PC-3 (cell line): ENCODE measurements at regions of chr10 and their contacts with region 1.

Region 1: GRCh38 chr10:20877986-20878983 is 18.8 kb downstream of the NEBL start:
- DNase-seq: peak; percentile 59
- ATAC-seq: peak; percentile 87
- H3K4me3 ChIP-seq: peak overlapping the region; percentile 54; the same call in 1 of the 2 replicates
- H3K27ac ChIP-seq: peak overlapping the region; percentile 99
- H3K4me1 ChIP-seq: peaks cover 29% of the 10 kb centered on the region
- H3K27me3 ChIP-seq: no peaks in the 10 kb centered on the region
- CTCF ChIP-seq: no peak

Region 2: DNA sequence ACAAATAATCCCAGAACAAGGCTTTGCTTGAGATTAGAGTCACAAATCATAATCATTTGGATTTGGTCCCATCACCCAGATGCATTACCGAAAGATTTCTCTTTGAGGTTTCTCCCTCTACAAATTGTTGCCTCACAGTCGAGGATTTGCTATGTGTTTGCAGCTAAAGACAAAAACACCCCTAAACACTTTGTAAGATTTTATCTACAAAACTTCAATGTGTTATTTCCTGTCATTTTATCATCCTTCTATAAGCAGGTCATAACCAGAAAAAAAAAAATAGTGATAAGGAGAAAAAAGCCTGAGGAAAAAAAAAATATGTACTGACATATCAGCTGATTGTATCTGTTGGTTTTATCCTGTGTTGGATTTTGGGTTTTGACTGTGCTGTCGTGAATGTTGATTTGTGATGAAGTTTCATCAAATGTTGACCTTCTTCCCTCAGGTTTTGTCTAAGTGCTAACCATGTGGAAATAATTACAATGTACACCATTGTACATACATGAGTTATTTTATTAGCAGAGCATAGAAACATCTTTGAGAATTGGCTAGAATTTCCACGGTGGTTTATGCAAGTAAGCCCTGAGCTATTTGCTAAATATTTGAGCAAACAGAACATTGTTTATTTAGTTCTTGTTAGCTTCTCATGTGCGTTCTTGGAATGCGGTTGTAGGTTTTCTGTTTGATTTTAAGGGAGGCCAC is 255.6 kb before region 1 on chr10:
- CTCF ChIA-PET with region 1: no interaction called
- POLR2A ChIA-PET with region 1: no interaction called
- intact Hi-C with region 1: no loop called
- DNase-seq: peak; percentile 87
- ATAC-seq: peak; percentile 94
- H3K4me3 ChIP-seq: no peak overlapping the region
- H3K27ac ChIP-seq: peak overlapping the region; percentile 43
- H3K4me1 ChIP-seq: peaks cover 12% of the 10 kb centered on the region
- H3K27me3 ChIP-seq: 0 out of 2 replicates have a peak, but pooled peaks cover 4% of the 10 kb centered on the region
- CTCF ChIP-seq: no peak

Region 3: GRCh38 chr10:20785174-20785573 is 93.1 kb before region 1 on chr10:
- CTCF ChIA-PET with region 1: no interaction called
- POLR2A ChIA-PET with region 1: no interaction called
- intact Hi-C with region 1: no loop called
- DNase-seq: no peak
- ATAC-seq: no peak
- H3K4me3 ChIP-seq: no peak overlapping the region
- H3K27ac ChIP-seq: no peak overlapping the region
- H3K4me1 ChIP-seq: no peaks in the 10 kb centered on the region
- H3K27me3 ChIP-seq: no peaks in the 10 kb centered on the region
- CTCF ChIP-seq: no peak

Region 4: DNA sequence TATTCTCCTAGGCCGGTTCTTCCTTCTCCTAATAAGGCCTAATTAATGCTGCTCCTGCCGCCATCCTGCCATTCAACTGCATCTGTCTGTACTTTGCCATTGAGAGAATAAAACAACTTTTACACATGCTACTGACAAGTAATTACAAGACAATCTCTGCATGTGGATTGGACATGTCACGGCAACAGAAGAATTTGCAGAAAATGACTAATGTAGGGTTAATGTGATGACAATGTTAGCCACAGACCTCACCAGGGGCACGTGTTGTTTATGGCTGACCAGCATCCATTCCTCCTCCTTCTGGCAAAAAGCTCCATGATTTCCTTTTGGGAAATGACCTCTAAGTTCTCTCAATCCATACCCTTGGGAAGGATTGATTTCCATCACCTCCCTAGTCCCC is 39.1 kb before region 1 on chr10:
- CTCF ChIA-PET with region 1: no interaction called
- POLR2A ChIA-PET with region 1: no interaction called
- intact Hi-C with region 1: no loop called
- DNase-seq: no peak
- ATAC-seq: no peak
- H3K4me3 ChIP-seq: no peak overlapping the region
- H3K27ac ChIP-seq: no peak overlapping the region
- H3K4me1 ChIP-seq: no peaks in the 10 kb centered on the region
- H3K27me3 ChIP-seq: no peaks in the 10 kb centered on the region
- CTCF ChIP-seq: no peak

Region 5: GRCh38 chr10:20858292-20859124 is 19.8 kb before region 1 on chr10:
- CTCF ChIA-PET with region 1: interaction called, 3 read pairs
- POLR2A ChIA-PET with region 1: no interaction called
- intact Hi-C with region 1: loop called (anchors 2 kb)
- DNase-seq: peak; percentile 53
- ATAC-seq: peak; percentile 51; the same call in 1 of the 2 replicates
- H3K4me3 ChIP-seq: no peak overlapping the region
- H3K27ac ChIP-seq: no peak overlapping the region
- H3K4me1 ChIP-seq: no peaks in the 10 kb centered on the region
- H3K27me3 ChIP-seq: no peaks in the 10 kb centered on the region
- CTCF ChIP-seq: peak; percentile 74

Region 6: GRCh38 chr10:20936396-20936795 is 58.1 kb after region 1 on chr10:
- CTCF ChIA-PET with region 1: no interaction called
- POLR2A ChIA-PET with region 1: no interaction called
- intact Hi-C with region 1: loop called (anchors 1 kb)
- DNase-seq: no peak
- ATAC-seq: peak; percentile 49
- H3K4me3 ChIP-seq: no peak overlapping the region
- H3K27ac ChIP-seq: peak overlapping the region; percentile 81
- H3K4me1 ChIP-seq: peaks cover 19% of the 10 kb centered on the region
- H3K27me3 ChIP-seq: no peaks in the 10 kb centered on the region
- CTCF ChIP-seq: no peak

Region 7: DNA sequence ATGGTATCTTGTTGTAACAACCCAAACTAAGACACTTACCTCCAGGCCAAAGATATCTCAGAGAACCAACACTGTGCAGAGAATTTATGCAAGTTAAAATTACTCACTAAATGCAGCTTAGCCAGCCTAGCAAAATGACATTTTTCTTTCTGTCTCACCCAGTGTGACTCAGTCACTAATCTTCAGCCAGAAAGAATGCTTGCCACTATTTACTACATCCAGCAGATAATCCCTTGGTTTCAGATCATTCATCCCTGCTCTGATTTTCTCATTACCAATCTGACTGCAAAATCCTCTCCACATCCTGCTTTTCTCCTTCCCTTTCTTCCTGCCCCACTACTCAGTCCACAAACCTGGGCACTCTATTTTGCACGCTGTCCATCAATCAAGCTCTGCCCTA is 112.3 kb after region 1 on chr10:
- CTCF ChIA-PET with region 1: interaction called, 3 read pairs
- POLR2A ChIA-PET with region 1: no interaction called
- intact Hi-C with region 1: loop called (anchors 1 kb)
- DNase-seq: peak; percentile 82
- ATAC-seq: peak; percentile 59
- H3K4me3 ChIP-seq: no peak overlapping the region
- H3K27ac ChIP-seq: peak overlapping the region; percentile 91
- H3K4me1 ChIP-seq: peaks cover 44% of the 10 kb centered on the region
- H3K27me3 ChIP-seq: no peaks in the 10 kb centered on the region
- CTCF ChIP-seq: no peak

Region 8: DNA sequence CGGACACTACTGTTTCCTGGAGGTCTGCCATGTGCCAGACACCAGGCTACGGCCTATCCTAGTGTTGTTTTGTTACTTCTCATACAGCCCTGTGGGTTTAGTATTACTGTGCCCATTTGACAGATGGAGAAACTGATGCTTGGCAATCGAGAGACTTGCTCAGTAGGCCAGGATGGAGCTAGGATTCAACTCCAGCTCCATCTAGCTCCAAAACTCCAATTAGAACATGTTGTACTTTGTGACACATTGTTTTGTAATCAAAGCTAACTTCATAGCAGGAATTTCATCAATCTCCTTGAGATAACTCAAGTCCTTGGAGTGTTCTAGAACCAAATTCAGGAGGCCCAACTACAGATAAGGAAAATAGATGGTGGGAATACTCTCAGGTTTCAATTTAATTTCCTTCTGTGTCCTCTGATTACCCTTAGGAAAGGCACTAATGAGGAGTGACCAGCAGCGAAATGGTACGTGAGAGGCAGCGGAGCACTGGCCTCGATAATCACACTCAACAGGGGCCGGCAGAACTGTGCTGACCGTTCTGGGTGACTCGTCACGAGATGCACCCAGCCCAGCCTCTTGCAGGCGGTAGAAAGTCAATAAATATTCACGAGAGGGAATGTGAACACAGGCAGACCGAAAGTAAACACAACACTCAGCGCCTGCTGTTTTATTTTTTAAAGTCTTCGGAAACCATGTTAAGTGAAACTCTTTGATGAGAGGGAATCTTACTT is 288.4 kb after region 1 on chr10:
- CTCF ChIA-PET with region 1: no interaction called
- POLR2A ChIA-PET with region 1: no interaction called
- intact Hi-C with region 1: loop called (anchors 10 kb)
- DNase-seq: peak; percentile 12
- ATAC-seq: peak; percentile 69
- H3K4me3 ChIP-seq: peak overlapping the region; percentile 43
- H3K27ac ChIP-seq: no peak overlapping the region
- H3K4me1 ChIP-seq: peaks cover 15% of the 10 kb centered on the region
- H3K27me3 ChIP-seq: no peaks in the 10 kb centered on the region
- CTCF ChIP-seq: no peak

Region 9: DNA sequence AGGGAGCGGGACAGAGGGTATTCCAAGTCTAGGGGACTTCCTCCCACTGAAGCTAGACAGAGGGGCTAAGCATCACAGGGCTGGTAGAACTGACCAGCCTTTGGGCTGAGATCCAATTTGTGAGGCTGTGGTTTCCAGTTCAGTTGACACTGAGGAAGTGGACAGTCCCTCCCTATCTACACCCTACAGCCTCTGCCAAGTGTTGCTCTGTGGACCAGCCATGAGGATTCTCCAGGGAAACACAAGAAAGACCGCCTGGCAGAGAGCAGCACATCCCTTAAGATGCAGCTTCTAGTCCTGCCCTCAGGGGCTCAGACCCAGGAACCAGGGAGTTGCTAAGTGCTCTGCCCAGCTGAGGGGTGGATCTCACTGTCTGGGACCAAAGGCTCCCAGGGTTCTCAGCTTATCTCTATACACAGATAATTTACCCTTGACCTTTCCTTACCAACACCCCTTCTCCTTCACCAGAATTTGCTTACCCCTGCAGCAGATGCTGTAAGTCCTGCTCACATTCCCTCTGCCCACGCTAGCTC is 395.2 kb after region 1 on chr10:
- CTCF ChIA-PET with region 1: no interaction called
- POLR2A ChIA-PET with region 1: no interaction called
- intact Hi-C with region 1: loop called (anchors 5 kb)
- DNase-seq: peak; percentile 38
- ATAC-seq: peak; percentile 59
- H3K4me3 ChIP-seq: no peak overlapping the region
- H3K27ac ChIP-seq: peak overlapping the region; percentile 75
- H3K4me1 ChIP-seq: peaks cover 19% of the 10 kb centered on the region
- H3K27me3 ChIP-seq: no peaks in the 10 kb centered on the region
- CTCF ChIP-seq: no peak